ENCODE measurements at regions of chr5 and their contacts with region 1.

Region 1: GRCh38 chr5:113510836-113511451 is 2.5 kb upstream of the YTHDC2 start:
- DNase-seq: peak; percentile 72
- ATAC-seq: peak; percentile 51
- H3K4me3 ChIP-seq: no peak overlapping the region
- H3K27ac ChIP-seq: no peak overlapping the region
- H3K4me1 ChIP-seq: peaks cover 15% of the 10 kb centered on the region
- H3K27me3 ChIP-seq: no peaks in the 10 kb centered on the region
- CTCF ChIP-seq: peak; percentile 84

Region 2: GRCh38 chr5:112995764-112996618 is 515.0 kb before region 1 on chr5:
- CTCF ChIA-PET with region 1: interaction called, 5 read pairs
- POLR2A ChIA-PET with region 1: no interaction called
- intact Hi-C with region 1: loop called (anchors 2 kb)
- DNase-seq: peak; percentile 90
- ATAC-seq: peak; percentile 78
- H3K4me3 ChIP-seq: no peak overlapping the region
- H3K27ac ChIP-seq: no peak overlapping the region
- H3K4me1 ChIP-seq: peaks cover 11% of the 10 kb centered on the region
- H3K27me3 ChIP-seq: no peaks in the 10 kb centered on the region
- CTCF ChIP-seq: peak; percentile 97

Region 3: DNA sequence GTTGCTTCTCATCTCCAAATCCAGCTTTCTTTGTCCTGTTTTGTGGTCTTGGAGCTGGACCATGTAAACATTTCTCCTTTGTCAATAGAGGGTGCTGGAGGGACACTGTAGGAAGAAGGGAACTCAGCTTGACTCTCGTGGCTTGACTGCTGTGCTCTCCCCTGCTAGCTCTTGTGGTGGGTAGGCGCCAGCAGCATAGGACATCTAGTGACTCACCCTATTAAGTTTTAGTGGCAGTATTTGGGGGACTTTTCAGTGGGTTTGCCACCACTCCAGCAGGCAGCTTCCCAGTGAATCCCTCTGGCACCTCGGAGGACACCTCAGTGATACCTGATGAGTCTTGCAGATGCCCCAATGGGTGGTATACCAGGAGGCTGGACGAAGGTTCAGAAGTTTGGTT is 174.0 kb before region 1 on chr5:
- CTCF ChIA-PET with region 1: interaction called, 22 read pairs
- POLR2A ChIA-PET with region 1: no interaction called
- intact Hi-C with region 1: loop called (anchors 1 kb)
- DNase-seq: peak; percentile 72
- ATAC-seq: peak; percentile 91
- H3K4me3 ChIP-seq: no peak overlapping the region
- H3K27ac ChIP-seq: no peak overlapping the region
- H3K4me1 ChIP-seq: no peaks in the 10 kb centered on the region
- H3K27me3 ChIP-seq: no peaks in the 10 kb centered on the region
- CTCF ChIP-seq: peak; percentile 78

Region 4: DNA sequence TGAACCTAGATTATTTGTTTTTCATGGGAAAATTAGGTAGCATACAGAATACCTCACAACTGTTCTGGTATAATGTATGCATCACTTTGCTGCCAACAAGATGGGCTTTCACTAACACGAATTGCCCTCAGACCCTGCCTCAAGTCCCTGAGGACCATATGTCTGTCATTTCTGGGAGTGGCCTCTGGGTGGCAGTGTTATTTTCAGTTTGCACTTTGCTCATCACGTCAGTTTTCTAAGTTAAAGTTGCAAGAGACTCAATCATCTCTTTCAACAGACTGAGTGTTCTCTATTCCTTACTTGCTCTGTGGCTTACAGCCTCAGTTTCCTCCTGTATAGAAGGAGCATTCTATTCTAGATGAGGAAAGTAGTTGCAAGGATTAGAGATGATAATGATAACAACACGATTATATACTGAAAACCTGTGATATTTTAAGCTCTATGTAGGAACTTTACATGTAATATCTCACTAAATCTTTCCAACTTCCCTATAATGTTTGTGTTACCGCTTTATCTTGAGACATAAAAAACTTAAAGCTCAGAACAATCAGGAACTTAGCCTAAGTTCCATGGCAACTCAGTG is 131.9 kb before region 1 on chr5:
- CTCF ChIA-PET with region 1: interaction called, 14 read pairs
- POLR2A ChIA-PET with region 1: no interaction called
- intact Hi-C with region 1: loop called (anchors 1 kb)
- DNase-seq: peak; percentile 77
- ATAC-seq: peak; percentile 63
- H3K4me3 ChIP-seq: no peak overlapping the region
- H3K27ac ChIP-seq: no peak overlapping the region
- H3K4me1 ChIP-seq: peaks cover 6% of the 10 kb centered on the region
- H3K27me3 ChIP-seq: no peaks in the 10 kb centered on the region
- CTCF ChIP-seq: peak; percentile 91

Region 5: GRCh38 chr5:113447498-113448050 is 63.4 kb before region 1 on chr5:
- CTCF ChIA-PET with region 1: no interaction called
- POLR2A ChIA-PET with region 1: no interaction called
- intact Hi-C with region 1: loop called (anchors 2 kb)
- DNase-seq: peak; percentile 38
- ATAC-seq: peak; percentile 66
- H3K4me3 ChIP-seq: no peak overlapping the region
- H3K27ac ChIP-seq: no peak overlapping the region
- H3K4me1 ChIP-seq: no peaks in the 10 kb centered on the region
- H3K27me3 ChIP-seq: no peaks in the 10 kb centered on the region; the same call in 1 of the 2 replicates
- CTCF ChIP-seq: peak; percentile 51

Region 6: DNA sequence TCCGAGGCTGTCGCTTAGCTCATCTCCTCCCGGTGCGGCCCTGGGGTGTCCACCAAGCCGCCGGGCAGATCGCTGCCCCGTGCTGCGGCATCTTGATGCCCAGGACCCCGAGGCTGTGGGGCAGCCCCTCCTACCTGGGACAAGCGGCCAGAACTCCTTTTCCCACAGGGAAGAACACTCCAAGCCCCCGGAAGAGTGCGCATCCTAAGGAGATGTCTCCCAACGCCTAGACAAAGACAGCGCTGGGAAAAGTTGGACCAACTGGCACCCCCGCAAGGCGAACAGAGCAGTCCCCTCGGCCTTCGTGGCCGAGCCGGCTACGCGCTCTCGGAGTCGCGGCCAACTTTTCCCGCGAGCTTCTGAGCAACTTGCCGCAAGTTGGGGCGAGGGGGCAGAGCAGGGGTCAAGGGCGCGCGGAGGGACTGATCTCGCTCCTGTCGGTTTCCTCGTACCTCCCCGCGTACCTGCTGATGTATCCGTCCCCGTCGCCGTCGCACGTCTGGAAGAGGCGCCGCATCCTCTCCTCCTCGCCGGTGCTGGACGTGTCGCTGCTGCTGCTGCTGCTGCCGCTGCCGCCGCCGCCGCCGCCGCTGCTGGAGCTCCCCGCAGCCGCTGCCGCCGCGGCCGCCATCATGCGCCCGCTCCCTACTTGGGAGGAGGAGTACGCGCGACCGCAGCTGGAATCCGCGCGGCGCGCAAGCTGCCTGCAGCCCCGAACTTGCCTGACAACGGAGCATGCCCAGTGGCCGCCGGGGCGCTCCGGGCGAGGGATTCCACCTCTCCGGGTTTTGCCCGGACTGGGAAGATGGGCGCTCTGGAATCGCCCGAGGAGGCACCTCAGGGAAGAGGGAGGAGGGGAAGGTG is 22.9 kb before region 1 on chr5 and contains the start of gene MCC:
- CTCF ChIA-PET with region 1: no interaction called
- POLR2A ChIA-PET with region 1: no interaction called
- intact Hi-C with region 1: loop called (anchors 2 kb)
- DNase-seq: peak; percentile 76
- ATAC-seq: peak; percentile 62
- H3K4me3 ChIP-seq: peak within 1 kb of the TSS; percentile 87
- H3K27ac ChIP-seq: no peak within 1 kb of the TSS
- H3K4me1 ChIP-seq: peaks cover 13% of the 10 kb centered on the region
- H3K27me3 ChIP-seq: peaks cover 16% of the 10 kb centered on the region; the same call in 1 of the 2 replicates
- CTCF ChIP-seq: no peak
- total RNA-seq, gene MCC: 7.1 and 10.3 TPM in 2 replicates

Region 7: DNA sequence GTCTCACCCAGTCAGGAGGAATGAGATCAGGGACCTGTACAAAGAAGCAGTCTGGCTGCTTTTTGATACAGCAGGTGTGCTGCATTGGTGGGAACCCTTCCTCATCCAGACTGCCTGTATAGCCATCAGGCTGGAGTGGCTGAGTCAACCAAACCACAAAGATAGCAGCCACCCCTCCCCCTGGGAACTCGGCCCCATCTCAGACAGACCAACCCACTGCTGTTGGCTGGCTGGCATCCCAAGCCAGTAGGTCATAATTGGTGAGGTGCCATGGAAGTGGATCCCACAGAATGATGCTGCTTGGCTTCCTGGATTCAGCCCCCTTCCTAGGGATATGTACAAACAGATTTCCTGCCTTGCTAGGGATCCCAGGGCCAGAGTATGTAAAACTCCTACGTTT is 63.5 kb after region 1 on chr5:
- CTCF ChIA-PET with region 1: no interaction called
- POLR2A ChIA-PET with region 1: no interaction called
- intact Hi-C with region 1: no loop called
- DNase-seq: peak; percentile 65
- ATAC-seq: peak; percentile 48; the same call in 1 of the 2 replicates
- H3K4me3 ChIP-seq: no peak overlapping the region
- H3K27ac ChIP-seq: no peak overlapping the region
- H3K4me1 ChIP-seq: peaks cover 11% of the 10 kb centered on the region
- H3K27me3 ChIP-seq: no peaks in the 10 kb centered on the region
- CTCF ChIP-seq: no peak

Region 8: GRCh38 chr5:113606298-113607134 is 95.6 kb after region 1 on chr5:
- CTCF ChIA-PET with region 1: interaction called, 3 read pairs
- POLR2A ChIA-PET with region 1: no interaction called
- intact Hi-C with region 1: loop called (anchors 2 kb)
- DNase-seq: peak; percentile 78
- ATAC-seq: peak; percentile 95
- H3K4me3 ChIP-seq: 0 out of 2 replicates have a peak overlapping the region, but pooled peaks have one; percentile 38
- H3K27ac ChIP-seq: no peak overlapping the region
- H3K4me1 ChIP-seq: peaks cover 9% of the 10 kb centered on the region
- H3K27me3 ChIP-seq: no peaks in the 10 kb centered on the region
- CTCF ChIP-seq: peak; percentile 94

Region 9: GRCh38 chr5:113723021-113723420 is 212.1 kb after region 1 on chr5:
- CTCF ChIA-PET with region 1: no interaction called
- POLR2A ChIA-PET with region 1: no interaction called
- intact Hi-C with region 1: no loop called
- DNase-seq: no peak
- ATAC-seq: no peak
- H3K4me3 ChIP-seq: no peak overlapping the region
- H3K27ac ChIP-seq: no peak overlapping the region
- H3K4me1 ChIP-seq: no peaks in the 10 kb centered on the region
- H3K27me3 ChIP-seq: no peaks in the 10 kb centered on the region
- CTCF ChIP-seq: no peak